Psoas muscle (tissue), 8 donors: ENCODE measurements at regions of chrX and their contacts with region 1.

Region 1: GRCh38 chrX:120036704-120037103 is 40.8 kb downstream of the RHOXF2B start:
- DNase-seq: no peak
- ATAC-seq: no peak
- H3K4me3 ChIP-seq: no peak overlapping the region
- H3K27ac ChIP-seq: no peak overlapping the region
- H3K4me1 ChIP-seq: no peaks in the 10 kb centered on the region
- H3K27me3 ChIP-seq: peaks cover 0 to 2% (median 0%) of the 10 kb centered on the region in 3 donors
- CTCF ChIP-seq: no peak

Region 2: GRCh38 chrX:118325453-118325852 is 1711.3 kb before region 1 on chrX:
- intact Hi-C with region 1: no loop called
- DNase-seq: no peak
- ATAC-seq: no peak
- H3K4me3 ChIP-seq: no peak overlapping the region
- H3K27ac ChIP-seq: no peak overlapping the region
- H3K4me1 ChIP-seq: no peaks in the 10 kb centered on the region
- H3K27me3 ChIP-seq: no peaks in the 10 kb centered on the region
- CTCF ChIP-seq: no peak

Region 3: DNA sequence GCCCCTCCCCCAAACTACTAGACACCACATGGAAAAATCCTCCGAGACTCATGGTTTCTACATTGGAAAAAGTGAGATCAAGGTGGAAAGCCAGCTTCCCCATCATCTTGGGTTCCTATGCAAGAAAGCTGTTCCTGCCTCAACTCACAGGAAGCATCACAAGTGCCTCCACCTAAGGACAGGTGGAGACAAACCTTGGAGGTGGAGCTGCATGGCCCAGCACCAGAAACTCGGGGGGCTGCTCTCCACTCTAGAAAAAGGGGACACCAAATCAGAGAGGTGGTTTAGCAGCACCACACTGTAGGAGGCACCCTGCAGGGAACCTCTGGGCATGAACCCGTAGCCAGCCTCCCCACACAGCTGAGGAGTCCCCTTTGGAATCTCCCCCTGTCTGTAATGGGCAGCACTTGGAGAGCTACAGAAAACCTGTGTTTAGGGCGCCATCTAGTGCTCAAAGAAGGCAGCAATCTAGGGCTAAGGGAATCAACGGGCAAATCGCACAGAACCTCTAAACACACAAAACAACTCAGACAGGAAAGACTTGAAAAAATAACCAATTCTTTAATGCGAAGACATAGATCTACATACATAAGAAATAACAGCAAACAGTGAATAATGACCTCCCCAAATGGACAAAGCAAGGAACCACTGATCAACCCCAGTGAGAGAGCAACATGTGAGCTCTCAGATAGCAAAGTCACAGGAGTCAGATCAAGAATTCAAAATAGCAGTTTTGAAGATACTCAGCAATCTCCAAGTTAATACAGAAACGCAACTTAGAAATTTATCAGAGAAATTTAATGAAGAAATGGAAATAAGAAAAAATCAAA is 176.9 kb after region 1 on chrX:
- intact Hi-C with region 1: loop called in 1 of 2 experiments (anchors 10 kb)
- DNase-seq: peak in 1 of 2 donors; percentile 26
- ATAC-seq: peak in 3 of 4 donors; percentile 59 to 77 (median 76)
- H3K4me3 ChIP-seq: no peak overlapping the region
- H3K27ac ChIP-seq: no peak overlapping the region
- H3K4me1 ChIP-seq: no peaks in the 10 kb centered on the region
- H3K27me3 ChIP-seq: no peaks in the 10 kb centered on the region
- CTCF ChIP-seq: peak; percentile 67